ENCODE measurements at regions of chr21 and their contacts with region 1.

Region 1: GRCh38 chr21:30981403-30981802 is 56.9 kb downstream of the KRTAP19-8 start:
- DNase-seq: peak in 1 of 5 donors; percentile 17
- ATAC-seq: peak in 1 of 4 donors; percentile 81
- H3K4me3 ChIP-seq: no peak overlapping the region
- H3K27ac ChIP-seq: peak overlapping the region in 6 of 12 donors; percentile 3 to 46 (median 20)
- H3K4me1 ChIP-seq: peaks cover 0 to 20% (median 0%) of the 10 kb centered on the region in 12 donors
- H3K27me3 ChIP-seq: no peaks in the 10 kb centered on the region
- CTCF ChIP-seq: no peak
- POLR2A ChIP-seq: no peak

Region 2: DNA sequence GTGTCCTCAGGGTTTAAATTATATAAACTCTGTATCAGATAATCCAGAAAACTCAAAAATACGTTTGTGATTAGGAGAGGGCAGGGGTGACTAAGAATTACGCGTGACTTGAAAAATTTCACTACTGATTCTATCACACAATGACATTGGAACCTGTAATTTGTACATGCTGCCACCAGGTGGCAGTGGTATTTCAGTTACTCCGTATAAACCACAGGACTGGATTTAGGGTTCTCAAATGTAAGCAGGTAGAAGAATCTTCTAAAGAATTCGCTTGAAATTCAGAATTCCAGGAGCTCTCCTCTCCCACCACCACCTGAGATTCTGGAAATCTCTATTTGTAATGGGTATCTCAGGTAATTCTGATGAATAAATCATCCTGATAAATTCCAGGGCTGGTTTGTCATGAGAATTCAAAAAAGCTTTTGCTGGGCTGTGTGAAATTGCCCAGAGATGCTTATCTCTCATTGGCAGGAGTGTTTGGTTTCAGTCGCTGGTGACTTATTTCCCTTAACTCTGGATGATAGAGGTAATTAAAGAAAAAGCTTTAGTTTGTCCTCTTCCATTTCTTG is 150.1 kb before region 1 on chr21:
- intact Hi-C with region 1: loop called in 1 of 10 experiments (anchors 10 kb)
- DNase-seq: no peak
- ATAC-seq: no peak
- H3K4me3 ChIP-seq: no peak overlapping the region
- H3K27ac ChIP-seq: no peak overlapping the region
- H3K4me1 ChIP-seq: no peaks in the 10 kb centered on the region
- H3K27me3 ChIP-seq: no peaks in the 10 kb centered on the region
- CTCF ChIP-seq: peak; percentile 17 to 65 (median 46)
- POLR2A ChIP-seq: no peak

Region 3: GRCh38 chr21:31030367-31031106 is 49.1 kb after region 1 on chr21:
- intact Hi-C with region 1: no loop called
- DNase-seq: no peak
- ATAC-seq: no peak
- H3K4me3 ChIP-seq: no peak overlapping the region
- H3K27ac ChIP-seq: no peak overlapping the region
- H3K4me1 ChIP-seq: no peaks in the 10 kb centered on the region
- H3K27me3 ChIP-seq: no peaks in the 10 kb centered on the region
- CTCF ChIP-seq: no peak
- POLR2A ChIP-seq: no peak